ENCODE measurements at regions of chr18 and their contacts with region 1.

Region 1: GRCh38 chr18:79523736-79524180 is 128.0 kb downstream of the NFATC1 start:
- DNase-seq: peak; percentile 88
- ATAC-seq: peak; percentile 57
- H3K4me3 Mint-ChIP-seq: peak overlapping the region; percentile 60
- H3K27ac Mint-ChIP-seq: peak overlapping the region; percentile 97
- H3K4me1 Mint-ChIP-seq: peaks cover 61% of the 10 kb centered on the region
- H3K27me3 Mint-ChIP-seq: no peaks in the 10 kb centered on the region

Region 2: DNA sequence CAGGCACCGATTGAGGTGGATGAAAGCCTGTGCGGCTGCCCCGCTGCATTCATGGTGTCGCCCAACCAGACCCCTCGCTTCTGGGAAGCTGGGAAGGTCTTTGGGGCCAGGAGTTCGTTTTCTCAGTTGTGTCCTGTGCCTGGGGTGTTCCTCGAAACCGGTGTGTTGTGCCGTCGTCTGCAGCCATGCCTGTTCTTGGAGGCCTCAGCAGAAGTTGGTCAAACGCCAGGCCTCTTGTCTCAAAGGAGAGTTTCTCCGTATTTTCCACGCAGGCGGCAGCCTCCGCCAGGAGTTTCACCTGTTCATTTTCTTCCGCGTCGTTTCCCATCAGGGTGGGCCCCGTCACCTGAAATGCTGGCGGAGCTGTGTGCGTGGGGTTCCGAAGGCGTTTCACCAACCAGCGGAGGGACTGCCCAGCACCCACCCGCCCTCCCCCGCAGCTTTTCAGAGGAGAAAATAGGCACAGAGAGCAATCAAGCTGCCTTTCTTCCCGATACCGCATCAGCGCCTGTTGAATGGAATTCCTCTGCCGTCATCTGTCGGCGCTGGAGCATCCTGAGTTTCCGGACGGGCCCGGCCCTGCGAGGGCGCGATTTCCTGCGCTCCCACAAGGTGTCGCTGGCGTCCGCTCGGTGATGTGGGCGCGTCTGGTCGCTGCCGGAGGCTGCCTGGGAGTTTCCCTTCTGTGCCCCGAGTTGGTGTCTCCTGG is 145.1 kb before region 1 on chr18:
- CTCF ChIA-PET with region 1: interaction called, 70 read pairs
- POLR2A ChIA-PET with region 1: no interaction called
- DNase-seq: peak; percentile 79
- ATAC-seq: peak; percentile 87
- H3K4me3 Mint-ChIP-seq: no peak overlapping the region
- H3K27ac Mint-ChIP-seq: no peak overlapping the region
- H3K4me1 Mint-ChIP-seq: peaks cover 9% of the 10 kb centered on the region
- H3K27me3 Mint-ChIP-seq: no peaks in the 10 kb centered on the region

Region 3: DNA sequence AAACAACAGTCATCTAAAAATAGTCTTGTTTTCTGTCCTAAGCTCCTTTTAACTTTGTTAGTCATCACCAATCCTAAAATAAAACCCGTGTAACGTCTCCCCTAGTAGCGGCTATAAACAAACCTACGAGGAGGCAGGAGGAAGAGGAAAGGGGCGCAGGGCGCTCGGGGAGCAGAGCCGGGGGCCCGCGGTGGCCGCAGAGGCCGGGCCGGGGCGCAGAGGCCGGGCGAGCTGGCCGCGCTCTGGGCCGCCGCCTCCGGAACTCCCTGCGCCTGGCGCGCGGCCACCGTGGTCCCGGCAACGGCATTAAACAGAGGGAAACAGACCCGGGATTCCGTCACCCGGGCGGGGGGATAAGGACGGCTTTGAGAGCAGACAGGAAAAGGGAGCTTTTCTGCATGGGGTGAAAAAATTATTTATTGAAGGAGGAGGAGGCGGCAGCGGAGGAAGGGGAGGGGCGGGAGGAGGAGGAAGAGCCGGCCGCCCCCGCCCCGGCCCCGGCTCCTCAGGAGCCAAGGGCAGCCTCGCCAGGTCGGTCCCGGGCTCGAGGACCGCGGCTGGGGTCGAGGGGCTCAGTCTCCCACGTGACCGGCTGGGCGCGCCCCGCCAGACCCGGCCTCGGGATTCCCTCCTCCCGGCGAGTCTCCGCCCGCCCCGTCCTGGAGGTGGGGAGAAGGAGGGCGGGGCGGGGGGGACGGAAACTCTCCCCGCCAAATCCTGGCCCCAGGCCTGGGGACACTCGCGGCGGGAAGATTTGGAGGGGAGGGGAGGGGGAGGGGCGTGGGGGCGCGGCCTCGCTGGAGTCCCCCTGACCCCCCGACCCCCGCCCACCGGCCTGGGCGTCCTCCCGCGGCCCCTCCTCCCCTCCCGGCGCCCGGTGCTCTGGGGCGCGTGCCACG is 129.9 kb before region 1 on chr18:
- CTCF ChIA-PET with region 1: interaction called, 19 read pairs
- POLR2A ChIA-PET with region 1: interaction called, 6 read pairs
- DNase-seq: peak; percentile 44
- ATAC-seq: peak; percentile 38
- H3K4me3 Mint-ChIP-seq: peak overlapping the region; percentile 74
- H3K27ac Mint-ChIP-seq: no peak overlapping the region
- H3K4me1 Mint-ChIP-seq: peaks cover 20% of the 10 kb centered on the region
- H3K27me3 Mint-ChIP-seq: peaks cover 33% of the 10 kb centered on the region

Region 4: DNA sequence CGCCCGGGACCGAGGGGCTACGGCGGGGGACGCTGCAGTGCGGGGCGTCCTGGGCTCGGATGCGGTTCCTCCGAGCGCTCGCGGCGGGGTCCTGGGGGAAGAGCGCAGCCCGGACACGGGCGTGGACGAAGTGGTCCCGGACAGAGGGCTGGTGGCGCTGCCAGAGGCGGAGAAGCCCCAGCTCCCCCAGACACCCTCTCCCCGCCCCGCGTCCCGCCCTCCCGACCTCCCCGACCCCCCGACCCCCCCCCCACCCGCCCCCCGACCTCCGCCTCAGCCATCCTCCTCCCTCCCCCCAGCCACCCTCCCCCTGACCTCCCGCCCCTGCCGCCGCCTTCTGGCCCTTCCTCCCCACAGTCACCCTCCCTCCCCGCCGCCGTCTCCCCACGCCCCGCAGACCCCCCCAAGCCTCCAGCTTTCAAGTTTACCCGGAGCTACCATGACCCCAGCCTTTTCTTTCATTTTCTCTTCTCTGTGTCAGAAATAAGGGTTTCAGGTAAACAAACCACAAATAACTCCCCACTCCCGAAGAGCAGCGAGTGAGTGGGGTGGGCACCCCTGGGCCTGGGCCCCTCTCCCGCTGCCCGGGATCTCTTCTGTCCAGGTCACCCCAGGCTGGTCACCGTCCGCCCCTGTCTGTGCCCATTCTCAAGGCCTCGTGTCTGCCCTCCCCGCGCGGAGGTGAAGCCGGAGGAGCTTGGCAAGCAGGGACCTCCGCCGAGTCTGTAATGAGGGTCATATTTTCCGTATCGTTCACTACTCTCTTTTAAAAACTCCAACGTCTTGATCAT is 123.0 kb before region 1 on chr18:
- CTCF ChIA-PET with region 1: interaction called, 19 read pairs
- POLR2A ChIA-PET with region 1: interaction called, 12 read pairs
- DNase-seq: peak; percentile 62
- ATAC-seq: peak; percentile 6
- H3K4me3 Mint-ChIP-seq: peak overlapping the region; percentile 85
- H3K27ac Mint-ChIP-seq: peak overlapping the region; percentile 91
- H3K4me1 Mint-ChIP-seq: peaks cover 56% of the 10 kb centered on the region
- H3K27me3 Mint-ChIP-seq: no peaks in the 10 kb centered on the region

Region 5: DNA sequence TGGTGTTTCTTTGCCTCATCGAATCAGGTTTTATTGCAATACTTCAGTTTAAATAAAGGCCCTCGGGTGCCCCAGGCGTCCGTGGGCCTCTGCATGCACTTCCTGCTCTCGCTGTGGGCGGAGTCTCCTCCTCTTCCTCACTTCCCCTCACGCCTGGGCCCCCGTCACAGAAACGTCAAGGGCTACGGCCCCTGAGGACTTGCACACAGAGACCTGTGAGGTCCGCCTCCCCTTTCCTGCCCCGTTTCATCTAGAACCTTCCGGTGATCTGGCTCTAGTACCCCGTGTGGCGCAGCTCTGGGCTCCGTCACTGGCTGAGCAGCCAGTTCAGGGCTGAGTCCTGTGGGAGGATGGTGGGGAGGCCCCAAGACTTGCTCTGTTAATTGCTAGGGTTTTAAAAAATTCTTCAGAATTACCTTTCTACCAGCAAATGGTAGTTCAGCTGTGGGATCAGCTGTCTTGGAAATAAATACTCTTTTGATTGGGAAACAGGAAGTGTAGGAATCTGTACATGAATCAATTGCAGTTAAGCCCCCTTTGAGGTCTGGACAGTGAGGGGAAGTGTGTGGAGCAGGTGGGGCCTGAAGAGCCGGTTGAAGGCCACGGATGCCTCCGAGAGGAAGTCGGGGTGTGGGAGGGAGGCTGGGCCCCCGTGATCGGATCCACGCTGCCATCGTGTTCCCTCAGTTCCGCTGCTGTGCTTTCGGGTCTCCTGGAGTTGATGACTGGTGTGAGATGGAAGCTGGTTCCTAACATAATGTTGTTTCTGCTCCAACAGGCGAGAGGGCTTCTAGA is 117.8 kb before region 1 on chr18:
- CTCF ChIA-PET with region 1: interaction called, 7 read pairs
- POLR2A ChIA-PET with region 1: interaction called, 12 read pairs
- DNase-seq: peak; percentile 95
- ATAC-seq: peak; percentile 85
- H3K4me3 Mint-ChIP-seq: peak overlapping the region; percentile 71
- H3K27ac Mint-ChIP-seq: peak overlapping the region; percentile 95
- H3K4me1 Mint-ChIP-seq: peaks cover 53% of the 10 kb centered on the region
- H3K27me3 Mint-ChIP-seq: no peaks in the 10 kb centered on the region

Region 6: GRCh38 chr18:79416022-79416676 is 107.6 kb before region 1 on chr18:
- CTCF ChIA-PET with region 1: no interaction called
- POLR2A ChIA-PET with region 1: no interaction called
- DNase-seq: no peak
- ATAC-seq: no peak
- H3K4me3 Mint-ChIP-seq: no peak overlapping the region
- H3K27ac Mint-ChIP-seq: no peak overlapping the region
- H3K4me1 Mint-ChIP-seq: peaks cover 3% of the 10 kb centered on the region
- H3K27me3 Mint-ChIP-seq: no peaks in the 10 kb centered on the region

Region 7: GRCh38 chr18:79484661-79485621 is 38.8 kb before region 1 on chr18:
- CTCF ChIA-PET with region 1: no interaction called
- POLR2A ChIA-PET with region 1: no interaction called
- DNase-seq: no peak
- ATAC-seq: no peak
- H3K4me3 Mint-ChIP-seq: no peak overlapping the region
- H3K27ac Mint-ChIP-seq: no peak overlapping the region
- H3K4me1 Mint-ChIP-seq: no peaks in the 10 kb centered on the region
- H3K27me3 Mint-ChIP-seq: no peaks in the 10 kb centered on the region

Region 8: DNA sequence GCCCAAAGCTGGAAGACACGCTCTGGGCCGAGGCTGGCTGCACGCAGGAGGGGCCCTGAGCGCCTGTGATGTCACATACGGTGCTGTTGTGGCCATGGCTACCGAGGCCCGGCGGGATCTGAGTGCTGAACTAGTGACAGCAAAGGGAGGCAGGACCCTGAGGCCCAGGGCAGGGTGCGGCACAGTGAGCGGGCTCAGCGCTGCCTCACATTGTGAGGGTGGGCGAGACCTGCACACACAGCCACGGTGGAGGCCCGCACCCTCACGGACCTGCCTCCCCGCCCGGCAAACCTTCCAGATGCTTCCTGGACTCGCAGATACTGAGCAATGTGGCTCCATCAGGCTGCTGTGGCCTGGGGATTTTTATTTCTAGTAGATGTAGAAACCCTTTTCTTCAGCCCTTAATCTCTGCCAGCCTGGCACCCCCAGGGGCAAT is 22.0 kb after region 1 on chr18:
- CTCF ChIA-PET with region 1: no interaction called
- POLR2A ChIA-PET with region 1: no interaction called
- DNase-seq: no peak
- ATAC-seq: no peak
- H3K4me3 Mint-ChIP-seq: no peak overlapping the region
- H3K27ac Mint-ChIP-seq: no peak overlapping the region
- H3K4me1 Mint-ChIP-seq: no peaks in the 10 kb centered on the region
- H3K27me3 Mint-ChIP-seq: no peaks in the 10 kb centered on the region

Measured in activated CD8-positive, alpha-beta T cell treated with anti-CD3 and anti-CD28 coated beads, Interleukin-2, amount 10 ng/mL, durations not matched to agents 7 days and 5 days (primary cell).